ENCODE measurements at regions of chr5 and their contacts with region 1.

Region 1: DNA sequence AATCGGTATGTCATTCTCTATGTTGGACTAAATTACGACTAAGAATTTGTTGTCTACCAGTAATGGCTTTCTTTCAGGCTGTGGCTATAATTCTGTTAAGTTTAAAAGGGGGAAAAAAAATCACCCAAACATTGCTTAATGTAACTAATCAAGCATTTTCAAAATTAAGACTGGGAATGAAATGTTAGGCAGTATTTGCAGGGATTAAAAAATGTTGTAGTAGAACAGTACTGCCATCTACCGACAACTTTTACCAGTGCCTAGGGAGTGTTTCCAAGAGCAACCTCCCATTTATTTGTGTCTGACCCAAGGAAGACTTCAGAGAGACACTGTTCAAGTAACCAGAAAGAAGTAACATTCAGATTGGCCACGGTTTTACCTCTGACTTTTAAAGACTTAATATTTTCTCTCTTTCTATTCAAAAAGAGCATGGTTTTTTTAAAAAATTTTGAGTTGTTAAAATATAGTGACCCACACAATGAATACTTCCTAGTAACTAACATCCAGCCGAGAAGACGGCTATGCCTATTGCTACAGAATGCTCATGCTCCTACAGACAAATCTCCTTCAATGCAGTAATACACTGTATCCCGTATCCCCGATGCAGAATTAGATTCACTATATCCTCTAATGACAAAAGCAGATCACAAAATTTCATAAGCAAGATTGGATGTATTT is 92.4 kb downstream of the ARL15 start:
- DNase-seq: no peak
- ATAC-seq: peak; percentile 83

Region 2: GRCh38 chr5:53170748-53171349 is 1047.1 kb before region 1 on chr5:
- intact Hi-C with region 1: loop called in 1 of 2 experiments (anchors 5 kb)
- DNase-seq: peak in 1 of 2 donors; percentile 13
- ATAC-seq: peak; percentile 53

Region 3: DNA sequence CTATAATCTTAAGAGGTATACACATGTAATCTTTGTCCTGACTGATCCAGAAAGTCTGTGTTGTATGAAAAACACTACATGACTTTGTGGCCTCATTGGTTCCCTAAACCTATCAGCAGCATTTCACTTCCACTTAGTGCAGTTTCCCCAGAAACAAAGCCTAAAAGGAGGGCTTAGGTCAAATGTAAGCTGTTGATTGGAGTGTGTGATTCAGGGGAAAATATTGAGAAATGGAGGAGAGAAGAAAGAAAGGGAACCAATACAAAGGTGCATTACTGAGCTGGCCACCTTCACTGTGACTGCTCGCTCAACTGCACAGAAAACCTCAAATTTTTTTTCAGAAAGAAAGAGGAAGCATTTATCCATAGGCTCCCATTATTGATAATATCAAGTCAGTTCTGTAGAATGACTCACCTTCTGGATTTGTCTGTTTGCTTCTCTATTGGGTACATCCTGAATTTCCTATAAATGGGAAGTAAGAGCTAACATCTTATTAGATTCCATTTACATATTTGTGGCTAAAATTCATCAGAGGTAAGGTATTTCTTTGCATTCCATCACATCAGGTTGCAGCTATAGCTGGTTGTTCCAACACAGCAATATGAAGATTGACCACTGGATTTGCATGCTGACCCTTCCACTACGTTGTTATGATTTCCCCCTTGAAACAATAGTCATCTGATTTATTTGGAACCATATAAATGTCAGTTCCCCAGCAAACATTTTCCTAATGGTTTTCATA is 747.8 kb before region 1 on chr5:
- intact Hi-C with region 1: loop called in 1 of 2 experiments (anchors 5 kb)
- DNase-seq: no peak
- ATAC-seq: no peak